T-cell (primary cell): ENCODE measurements at regions of chr14 and their contacts with region 1.

Region 1: DNA sequence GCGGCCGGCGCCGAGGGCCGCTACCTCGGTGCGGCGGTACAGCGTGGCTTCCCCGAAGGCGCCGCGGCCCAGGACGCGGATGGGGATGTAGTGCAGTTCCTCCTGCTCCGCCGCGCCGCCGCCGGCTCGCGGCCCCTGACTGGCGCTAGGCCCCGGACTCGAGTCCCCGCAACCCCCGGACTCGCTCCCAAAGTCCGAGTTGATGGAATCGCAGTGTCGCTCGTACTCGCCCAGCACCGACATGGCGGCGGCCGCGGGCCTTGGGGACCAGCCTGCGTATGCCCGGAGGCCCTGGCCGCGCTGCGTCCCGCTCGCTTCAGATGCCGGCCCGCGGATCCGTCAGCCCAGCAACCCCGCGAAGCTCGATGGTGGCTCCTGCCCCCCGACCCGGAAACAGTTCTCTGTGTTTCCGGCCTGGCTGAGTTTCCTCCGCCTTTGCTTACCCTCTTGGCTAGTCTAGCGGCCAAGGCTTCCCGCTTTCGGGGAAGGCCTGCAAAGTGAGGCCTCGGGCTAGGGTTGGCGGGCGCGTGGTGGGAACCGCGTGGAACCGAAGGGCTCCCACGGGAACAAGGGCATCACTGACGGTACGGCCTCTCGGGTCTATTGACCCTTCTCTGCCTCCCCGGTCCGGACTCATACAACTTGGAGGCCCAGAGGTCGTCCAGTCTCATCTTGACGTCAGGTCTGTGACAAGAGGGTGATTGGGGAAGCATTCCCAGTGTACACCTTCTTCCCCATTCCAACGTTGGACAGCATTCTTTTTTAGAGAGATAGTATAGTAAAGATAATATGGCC is at the start of gene NEK9:
- DNase-seq: peak; percentile 77 to 93 (median 87)
- ATAC-seq: peak; percentile 90 to 93 (median 92)
- H3K4me3 ChIP-seq: peak within 1 kb of the TSS; percentile 36 to 87
- H3K4me3 Mint-ChIP-seq: peak within 1 kb of the TSS; percentile 95 to 97 (median 96)
- H3K27ac ChIP-seq: peak within 1 kb of the TSS; percentile 92
- H3K27ac Mint-ChIP-seq: peak within 1 kb of the TSS; percentile 96
- H3K4me1 ChIP-seq: peaks cover 14 to 34% of the 10 kb centered on the region in 2 experiments
- H3K4me1 Mint-ChIP-seq: peaks cover 44 to 52% (median 45%) of the 10 kb centered on the region in 3 donors
- H3K27me3 ChIP-seq: no peaks in the 10 kb centered on the region
- H3K27me3 Mint-ChIP-seq: no peaks in the 10 kb centered on the region
- total RNA-seq, gene NEK9: 78.9 to 121 (median 117) TPM

Region 2: DNA sequence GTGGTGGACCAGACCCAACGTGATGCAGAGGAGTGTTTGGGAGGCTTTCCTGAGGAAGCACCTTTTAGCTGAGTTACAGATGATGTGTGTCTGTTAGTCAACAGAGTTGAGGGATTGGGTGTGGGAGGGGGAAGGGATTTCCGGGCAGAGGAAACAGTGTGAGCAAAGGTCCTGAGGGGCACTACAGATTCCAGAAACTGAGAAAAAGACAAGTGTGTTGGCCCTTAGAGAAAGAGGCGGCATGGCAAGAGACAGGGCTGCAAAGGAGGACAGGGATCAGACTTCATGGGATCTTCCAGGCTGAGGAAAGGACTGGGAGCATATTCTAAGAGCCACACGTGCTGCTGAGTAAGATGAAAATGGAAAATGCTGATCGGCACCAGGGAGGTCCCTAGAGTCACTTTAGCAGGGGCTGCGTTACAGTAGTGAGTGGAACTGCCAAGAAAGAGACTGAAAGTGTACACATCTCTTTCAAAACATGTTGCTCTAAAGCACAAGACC is 194.4 kb before region 1 on chr14:
- CTCF ChIA-PET with region 1: no interaction called
- POLR2A ChIA-PET with region 1: interaction called in 1 of 2 experiments, 16 read pairs
- DNase-seq: no peak
- ATAC-seq: no peak
- H3K4me3 ChIP-seq: no peak overlapping the region
- H3K4me3 Mint-ChIP-seq: no peak overlapping the region
- H3K27ac ChIP-seq: no peak overlapping the region
- H3K27ac Mint-ChIP-seq: no peak overlapping the region
- H3K4me1 ChIP-seq: peaks cover 3 to 4% of the 10 kb centered on the region in 2 experiments
- H3K4me1 Mint-ChIP-seq: peaks cover 16 to 19% (median 16%) of the 10 kb centered on the region in 3 donors
- H3K27me3 ChIP-seq: peaks cover 0 to 18% of the 10 kb centered on the region in 2 experiments
- H3K27me3 Mint-ChIP-seq: peaks cover 0 to 2% of the 10 kb centered on the region in 2 donors

Region 3: GRCh38 chr14:75084513-75084912 is 42.4 kb before region 1 on chr14:
- CTCF ChIA-PET with region 1: no interaction called
- POLR2A ChIA-PET with region 1: no interaction called
- DNase-seq: no peak
- ATAC-seq: no peak
- H3K4me3 ChIP-seq: no peak overlapping the region
- H3K4me3 Mint-ChIP-seq: no peak overlapping the region
- H3K27ac ChIP-seq: no peak overlapping the region
- H3K27ac Mint-ChIP-seq: peak overlapping the region in 1 of 2 donors; percentile 11
- H3K4me1 ChIP-seq: no peaks in the 10 kb centered on the region
- H3K4me1 Mint-ChIP-seq: no peaks in the 10 kb centered on the region
- H3K27me3 ChIP-seq: no peaks in the 10 kb centered on the region
- H3K27me3 Mint-ChIP-seq: no peaks in the 10 kb centered on the region

Region 4: DNA sequence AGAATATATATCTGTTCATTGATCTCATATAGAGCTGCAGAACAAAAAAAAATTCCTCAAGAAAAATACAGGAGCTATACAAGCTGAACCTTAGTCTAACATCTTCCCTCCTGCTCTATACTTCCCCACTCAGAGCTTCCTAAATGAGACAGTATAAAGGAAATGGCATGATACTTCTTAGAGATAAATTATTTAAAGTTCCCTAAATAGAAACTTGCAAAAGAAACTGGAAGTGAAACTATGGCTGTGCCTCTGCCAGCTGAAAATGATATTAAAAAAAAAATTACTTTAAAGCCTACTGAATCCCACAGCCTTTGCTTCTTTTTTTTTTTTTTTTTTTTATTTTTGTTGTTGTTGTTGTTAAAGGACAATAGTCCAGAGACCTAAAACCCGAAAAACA is 11.6 kb after region 1 on chr14:
- CTCF ChIA-PET with region 1: interaction called in 1 of 2 experiments, 5 read pairs
- POLR2A ChIA-PET with region 1: interaction called in 1 of 2 experiments, 12 read pairs
- DNase-seq: no peak
- ATAC-seq: peak in 1 of 4 experiments; percentile 54
- H3K4me3 ChIP-seq: no peak overlapping the region
- H3K4me3 Mint-ChIP-seq: no peak overlapping the region
- H3K27ac ChIP-seq: peak overlapping the region; percentile 9
- H3K27ac Mint-ChIP-seq: peak overlapping the region; percentile 80 to 83
- H3K4me1 ChIP-seq: peaks cover 9 to 22% of the 10 kb centered on the region in 2 experiments
- H3K4me1 Mint-ChIP-seq: peaks cover 42 to 52% (median 45%) of the 10 kb centered on the region in 3 donors
- H3K27me3 ChIP-seq: no peaks in the 10 kb centered on the region
- H3K27me3 Mint-ChIP-seq: no peaks in the 10 kb centered on the region

Region 5: DNA sequence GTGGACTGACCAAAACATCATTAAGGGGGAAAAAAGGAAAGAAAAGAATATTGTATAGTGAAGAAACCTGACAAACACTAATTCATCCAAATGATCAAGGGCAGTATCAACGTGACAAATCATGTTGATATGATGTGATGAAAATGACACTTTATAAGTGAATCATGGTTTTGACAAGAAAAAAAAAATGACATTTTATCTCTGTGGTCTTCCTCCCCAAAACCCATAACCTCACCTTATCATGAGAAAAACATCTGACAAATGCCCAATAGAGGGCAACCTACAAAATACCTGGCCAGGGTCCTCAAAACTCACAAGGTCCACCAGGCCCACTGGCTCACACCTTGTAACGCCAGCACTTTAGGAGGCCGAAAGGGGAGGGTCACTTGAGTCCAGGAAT is 35.8 kb after region 1 on chr14:
- CTCF ChIA-PET with region 1: no interaction called
- POLR2A ChIA-PET with region 1: no interaction called
- DNase-seq: no peak
- ATAC-seq: no peak
- H3K4me3 ChIP-seq: no peak overlapping the region
- H3K4me3 Mint-ChIP-seq: no peak overlapping the region
- H3K27ac ChIP-seq: no peak overlapping the region
- H3K27ac Mint-ChIP-seq: peak overlapping the region in 1 of 2 donors; percentile 13
- H3K4me1 ChIP-seq: peaks cover 2 to 7% of the 10 kb centered on the region in 2 experiments
- H3K4me1 Mint-ChIP-seq: peaks cover 53 to 69% (median 68%) of the 10 kb centered on the region in 3 donors
- H3K27me3 ChIP-seq: no peaks in the 10 kb centered on the region
- H3K27me3 Mint-ChIP-seq: no peaks in the 10 kb centered on the region

Region 6: GRCh38 chr14:75301666-75302325 is 174.9 kb after region 1 on chr14:
- CTCF ChIA-PET with region 1: interaction called, 5 to 24 read pairs
- POLR2A ChIA-PET with region 1: interaction called, 6 to 11 read pairs
- DNase-seq: peak in 1 of 35 experiments; percentile 25
- ATAC-seq: no peak
- H3K4me3 ChIP-seq: no peak overlapping the region
- H3K4me3 Mint-ChIP-seq: no peak overlapping the region
- H3K27ac ChIP-seq: no peak overlapping the region
- H3K27ac Mint-ChIP-seq: peak overlapping the region in 1 of 2 donors; percentile 55
- H3K4me1 ChIP-seq: peaks cover 3 to 15% of the 10 kb centered on the region in 2 experiments
- H3K4me1 Mint-ChIP-seq: peaks cover 11 to 21% (median 17%) of the 10 kb centered on the region in 3 donors
- H3K27me3 ChIP-seq: no peaks in the 10 kb centered on the region
- H3K27me3 Mint-ChIP-seq: no peaks in the 10 kb centered on the region